Left ventricle myocardium superior (tissue), 1 donor: ENCODE measurements at regions of chr1 and their contacts with region 1.

Region 1: GRCh38 chr1:165914136-165914798 is 86.9 kb downstream of the UCK2 start:
- DNase-seq: no peak
- ATAC-seq: peak; percentile 81

Region 2: DNA sequence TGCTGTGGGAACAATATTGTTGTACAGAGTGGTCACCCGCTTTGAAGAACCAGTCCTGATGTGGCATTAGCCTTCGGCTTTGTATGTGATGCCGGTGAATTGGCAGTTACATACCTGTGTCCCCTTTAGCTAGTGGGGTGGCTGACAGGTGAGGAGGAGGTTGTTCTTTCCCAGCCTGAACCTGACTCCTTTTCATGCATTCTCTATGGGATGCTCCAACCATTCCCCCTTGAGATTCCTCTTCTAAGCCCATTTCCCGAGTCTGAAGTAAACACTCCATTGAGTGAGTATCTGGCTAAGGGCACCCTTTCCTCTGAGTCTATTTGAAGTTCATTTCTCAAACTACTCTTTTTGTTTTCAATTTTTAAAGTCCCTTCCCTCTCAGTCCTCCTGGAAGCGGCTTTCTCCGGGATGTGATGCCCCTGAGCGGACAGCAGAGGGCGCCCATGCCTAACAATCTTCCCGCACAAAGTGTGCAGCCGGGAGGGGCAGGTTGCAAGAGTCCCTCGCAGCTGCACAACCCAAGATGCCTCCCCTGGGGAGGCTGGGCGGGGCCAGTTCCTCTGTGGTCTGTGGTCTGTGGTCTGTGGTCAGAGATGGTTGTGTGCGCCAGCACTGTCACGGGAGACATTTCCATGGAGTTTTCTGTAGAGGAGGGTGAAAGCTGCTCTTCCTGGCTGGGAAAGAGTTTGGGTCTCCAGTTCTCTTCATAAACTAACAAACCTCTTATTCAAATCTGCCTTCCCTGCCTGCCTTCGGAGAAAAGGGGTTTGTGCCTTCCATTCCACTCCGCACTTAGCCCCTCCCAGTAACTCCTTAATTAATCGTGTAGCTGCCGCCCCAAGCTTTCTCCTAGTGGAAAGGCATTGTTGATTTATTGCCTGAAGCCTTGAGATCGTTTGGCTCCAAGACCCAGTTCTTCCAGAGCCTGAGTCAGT is 521.4 kb before region 1 on chr1:
- intact Hi-C with region 1: loop called (anchors 10 kb)
- DNase-seq: peak; percentile 88
- ATAC-seq: peak; percentile 96

Region 3: DNA sequence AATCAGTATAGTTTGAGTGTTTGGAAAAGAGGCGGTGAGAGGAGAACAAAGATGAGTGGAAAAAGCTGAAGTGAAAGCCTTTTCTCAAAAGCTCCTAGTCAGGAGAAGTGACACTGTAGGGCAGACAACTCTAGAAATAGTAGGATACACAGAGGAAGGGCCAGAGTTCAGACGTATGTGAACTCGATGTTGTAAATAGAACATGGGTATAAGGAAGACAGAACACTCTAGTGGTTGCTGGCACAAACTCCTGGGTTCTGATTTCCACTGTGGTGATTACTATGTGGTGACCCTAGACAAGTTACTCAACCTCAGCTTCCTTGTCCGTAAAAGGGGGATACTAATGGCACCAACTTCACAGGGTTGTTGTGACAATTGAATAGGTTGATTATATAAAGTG is 313.5 kb before region 1 on chr1:
- intact Hi-C with region 1: loop called (anchors 5 kb)
- DNase-seq: no peak
- ATAC-seq: no peak

Region 4: GRCh38 chr1:165717918-165718515 is 196.2 kb before region 1 on chr1:
- intact Hi-C with region 1: loop called (anchors 2 kb)
- DNase-seq: no peak
- ATAC-seq: peak; percentile 42

Region 5: DNA sequence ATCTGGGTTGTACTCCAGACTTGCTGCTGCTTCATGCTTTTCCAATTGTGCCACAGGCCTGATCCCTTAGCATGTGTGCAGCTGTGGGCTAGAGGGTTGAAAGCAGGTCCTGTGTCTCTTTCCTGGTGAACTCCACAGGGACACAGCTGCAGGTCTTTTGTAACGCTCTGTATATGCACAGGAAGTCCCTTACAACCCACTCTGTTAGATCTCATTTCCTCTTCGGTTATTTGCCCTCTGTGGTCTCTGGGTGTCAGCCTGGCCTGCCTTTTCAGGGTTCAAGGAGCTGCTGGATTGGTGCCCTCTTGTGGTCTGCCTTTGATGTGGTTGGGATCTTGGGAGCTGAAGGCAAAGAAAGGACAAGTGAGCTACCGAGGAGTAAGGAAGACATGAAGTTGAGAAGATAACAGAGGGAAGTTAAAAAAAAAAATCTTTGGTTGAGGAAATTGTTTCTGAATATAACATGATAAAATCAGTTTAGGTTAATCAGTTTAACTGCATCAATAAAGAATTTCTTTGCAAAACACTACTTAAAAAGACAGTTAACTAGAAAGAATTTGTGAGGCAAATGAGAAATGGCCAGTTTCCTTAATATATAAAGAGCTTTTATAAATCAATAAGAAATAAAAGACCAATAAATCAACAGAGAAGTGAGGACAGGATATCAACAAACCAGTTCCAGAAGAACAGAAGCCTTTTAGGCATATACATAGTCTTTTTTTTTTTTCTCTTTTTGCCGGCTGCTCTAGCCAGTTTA is 42.8 kb before region 1 on chr1:
- intact Hi-C with region 1: no loop called
- DNase-seq: peak; percentile 56
- ATAC-seq: peak; percentile 85